ENCODE measurements at regions of chr3 and their contacts with region 1.

Region 1: GRCh38 chr3:52446631-52447511 is 2.0 kb upstream of the SEMA3G start:
- DNase-seq: peak in 9 of 10 donors; percentile 33 to 94 (median 67)

Region 2: DNA sequence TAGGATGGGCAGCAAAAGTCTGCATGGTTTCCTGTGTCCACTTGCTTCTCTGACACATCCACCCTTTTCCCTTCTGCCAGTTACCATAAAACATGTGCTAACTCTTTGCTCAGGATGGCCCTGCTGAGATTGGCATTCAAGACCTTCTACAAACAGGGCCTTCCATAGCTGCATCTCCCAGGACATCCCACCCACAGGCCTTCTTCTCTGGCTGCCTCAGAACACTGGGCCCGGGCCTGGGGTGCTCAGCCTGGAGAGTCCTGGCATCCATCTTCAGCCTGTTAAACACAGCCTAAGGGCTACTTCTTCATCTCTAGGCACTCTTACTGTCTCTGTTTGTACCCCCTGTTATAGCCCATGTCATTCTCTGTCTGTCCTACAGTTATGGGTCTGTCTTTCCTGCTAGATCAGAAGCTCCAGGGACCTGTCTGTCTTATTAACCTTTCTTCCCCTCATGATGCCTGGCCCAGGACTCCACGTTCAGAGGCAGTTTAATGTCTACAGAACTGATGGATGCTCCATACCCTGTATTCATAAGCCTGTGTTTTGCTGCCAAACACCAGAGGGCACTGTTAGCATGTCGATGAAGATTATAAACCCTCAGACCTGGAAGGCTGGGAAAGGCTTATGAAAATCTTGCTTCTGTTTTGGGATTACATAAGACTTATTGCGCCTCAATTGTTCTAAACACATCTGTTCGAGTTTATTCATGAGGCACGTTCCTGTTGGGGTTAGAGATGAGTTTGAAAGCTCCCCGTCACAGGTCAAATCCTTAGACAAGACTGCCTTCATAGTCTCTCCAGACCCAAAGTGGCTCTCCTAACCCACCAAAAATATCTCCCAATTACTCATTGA is 18.5 kb before region 1 on chr3:
- intact Hi-C with region 1: loop called (anchors 1 kb)
- DNase-seq: peak in 7 of 10 donors; percentile 55 to 87 (median 65)

Region 3: GRCh38 chr3:52705688-52706686 is 259.1 kb after region 1 on chr3 and contains the starts of genes GLT8D1 and SPCS1:
- intact Hi-C with region 1: no loop called
- DNase-seq: peak; percentile 77 to 99 (median 88)

Measured in posterior cingulate gyrus (tissue), 11 donors.